Heart right ventricle (tissue), 16 donors: ENCODE measurements at regions of chr2 and their contacts with region 1.

Region 1: DNA sequence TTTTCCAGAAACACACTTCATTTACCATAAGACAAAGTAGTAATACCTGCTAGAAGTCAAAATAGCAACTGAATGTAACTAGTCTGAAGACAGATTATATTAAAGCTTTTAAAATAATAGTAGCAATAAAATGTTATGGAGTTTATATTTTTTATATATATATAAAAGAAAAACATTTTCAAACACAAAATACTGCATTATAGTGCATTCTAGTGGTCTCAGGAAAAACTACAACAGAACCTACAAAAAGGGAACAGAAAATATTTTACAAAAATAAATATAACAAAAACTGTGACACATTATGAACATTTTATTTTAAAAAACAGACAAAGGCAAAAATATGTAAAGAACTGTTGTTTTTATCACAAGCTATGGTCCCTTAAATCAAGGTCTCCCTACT is 48.0 kb downstream of the STRN start:
- DNase-seq: no peak
- ATAC-seq: no peak
- H3K4me3 ChIP-seq: no peak overlapping the region
- H3K27ac ChIP-seq: no peak overlapping the region
- H3K4me1 ChIP-seq: peaks cover 0 to 48% (median 22%) of the 10 kb centered on the region in 9 donors
- H3K27me3 ChIP-seq: no peaks in the 10 kb centered on the region
- CTCF ChIP-seq: peak in 6 of 9 donors; percentile 30 to 54 (median 34)

Region 2: GRCh38 chr2:36785179-36785795 is 133.0 kb before region 1 on chr2:
- intact Hi-C with region 1: no loop called
- DNase-seq: peak; percentile 42 to 44
- ATAC-seq: peak in 6 of 8 donors; percentile 27 to 63 (median 59)
- H3K4me3 ChIP-seq: no peak overlapping the region
- H3K27ac ChIP-seq: no peak overlapping the region
- H3K4me1 ChIP-seq: peaks cover 0 to 28% (median 6%) of the 10 kb centered on the region in 9 donors
- H3K27me3 ChIP-seq: no peaks in the 10 kb centered on the region
- CTCF ChIP-seq: peak; percentile 91 to 97 (median 93)

Region 3: GRCh38 chr2:36966370-36967235 is 48.3 kb after region 1 on chr2 and contains the start of gene STRN:
- intact Hi-C with region 1: loop called in 1 of 10 experiments (anchors 10 kb)
- DNase-seq: peak; percentile 96 to 98
- ATAC-seq: peak; percentile 96 to 99 (median 98)
- H3K4me3 ChIP-seq: peak within 1 kb of the TSS; percentile 45 to 98 (median 82)
- H3K27ac ChIP-seq: peak within 1 kb of the TSS; percentile 78 to 96 (median 94)
- H3K4me1 ChIP-seq: peaks cover 0 to 48% (median 35%) of the 10 kb centered on the region in 9 donors
- H3K27me3 ChIP-seq: no peaks in the 10 kb centered on the region
- CTCF ChIP-seq: no peak
- total RNA-seq, gene STRN: 37.0 to 102 (median 67.8) TPM